Caco-2 (cell line): ENCODE measurements at regions of chr4 and their contacts with region 1.

Region 1: DNA sequence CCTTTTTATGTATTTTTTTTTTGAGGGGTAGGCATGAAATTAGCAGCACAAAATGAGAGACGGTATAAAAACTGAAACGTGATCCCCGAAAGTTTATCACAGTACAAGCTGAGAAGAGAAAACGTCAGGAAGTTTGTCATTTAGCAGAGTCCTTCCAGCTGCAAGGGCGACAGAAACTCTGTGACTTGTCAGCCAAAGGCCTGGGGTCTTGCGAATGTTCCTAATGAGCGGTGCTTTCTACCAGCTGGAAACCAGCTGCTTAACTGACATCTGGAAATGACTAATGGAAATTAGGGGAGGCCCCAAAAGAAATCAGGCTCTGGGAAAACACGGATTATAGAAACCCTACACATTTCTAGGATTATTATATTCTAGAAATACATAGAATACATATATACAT is 66.5 kb downstream of the CHRNA9 start:
- DNase-seq: no peak
- H3K4me3 ChIP-seq: no peak overlapping the region
- H3K4me3 Mint-ChIP-seq: no peak overlapping the region
- H3K27ac Mint-ChIP-seq: no peak overlapping the region
- H3K4me1 ChIP-seq: peaks cover 37% of the 10 kb centered on the region
- H3K4me1 Mint-ChIP-seq: peaks cover 25% of the 10 kb centered on the region
- H3K27me3 ChIP-seq: no peaks in the 10 kb centered on the region
- H3K27me3 Mint-ChIP-seq: no peaks in the 10 kb centered on the region
- CTCF ChIP-seq: no peak

Region 2: DNA sequence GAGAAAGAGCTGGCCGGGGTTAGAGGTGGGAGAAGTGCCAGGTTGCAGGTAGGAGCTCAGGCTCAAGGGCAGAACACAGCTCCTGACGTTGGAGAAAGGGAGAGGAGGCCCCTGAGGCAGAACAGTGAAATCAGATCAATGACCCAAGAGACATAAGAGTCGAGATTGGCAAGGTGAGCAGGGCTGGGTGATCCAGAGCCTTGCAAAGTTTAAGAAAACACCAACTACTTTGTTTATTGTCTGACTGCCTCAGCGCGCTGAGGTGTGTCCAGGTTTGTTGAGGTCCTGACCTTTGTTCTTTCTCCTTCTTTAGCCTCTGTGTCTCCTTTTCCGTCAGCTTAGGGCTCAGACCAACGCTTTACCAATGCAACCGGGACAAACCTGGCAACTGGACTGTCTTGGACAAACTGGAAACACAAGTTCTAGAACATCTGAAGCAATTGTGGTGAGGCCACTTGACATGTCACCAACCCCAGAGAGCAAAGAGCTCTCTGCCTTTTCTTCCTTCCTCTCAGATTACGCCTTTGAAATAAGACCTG is 38.2 kb before region 1 on chr4:
- CTCF ChIA-PET with region 1: no interaction called
- POLR2A ChIA-PET with region 1: interaction called, 4 read pairs
- intact Hi-C with region 1: loop called (anchors 1 kb)
- DNase-seq: peak; percentile 85 to 89
- H3K4me3 ChIP-seq: no peak overlapping the region
- H3K4me3 Mint-ChIP-seq: peak overlapping the region; percentile 52
- H3K27ac Mint-ChIP-seq: peak overlapping the region; percentile 89
- H3K4me1 ChIP-seq: peaks cover 35% of the 10 kb centered on the region
- H3K4me1 Mint-ChIP-seq: peaks cover 47% of the 10 kb centered on the region
- H3K27me3 ChIP-seq: no peaks in the 10 kb centered on the region
- H3K27me3 Mint-ChIP-seq: no peaks in the 10 kb centered on the region
- CTCF ChIP-seq: no peak

Region 3: DNA sequence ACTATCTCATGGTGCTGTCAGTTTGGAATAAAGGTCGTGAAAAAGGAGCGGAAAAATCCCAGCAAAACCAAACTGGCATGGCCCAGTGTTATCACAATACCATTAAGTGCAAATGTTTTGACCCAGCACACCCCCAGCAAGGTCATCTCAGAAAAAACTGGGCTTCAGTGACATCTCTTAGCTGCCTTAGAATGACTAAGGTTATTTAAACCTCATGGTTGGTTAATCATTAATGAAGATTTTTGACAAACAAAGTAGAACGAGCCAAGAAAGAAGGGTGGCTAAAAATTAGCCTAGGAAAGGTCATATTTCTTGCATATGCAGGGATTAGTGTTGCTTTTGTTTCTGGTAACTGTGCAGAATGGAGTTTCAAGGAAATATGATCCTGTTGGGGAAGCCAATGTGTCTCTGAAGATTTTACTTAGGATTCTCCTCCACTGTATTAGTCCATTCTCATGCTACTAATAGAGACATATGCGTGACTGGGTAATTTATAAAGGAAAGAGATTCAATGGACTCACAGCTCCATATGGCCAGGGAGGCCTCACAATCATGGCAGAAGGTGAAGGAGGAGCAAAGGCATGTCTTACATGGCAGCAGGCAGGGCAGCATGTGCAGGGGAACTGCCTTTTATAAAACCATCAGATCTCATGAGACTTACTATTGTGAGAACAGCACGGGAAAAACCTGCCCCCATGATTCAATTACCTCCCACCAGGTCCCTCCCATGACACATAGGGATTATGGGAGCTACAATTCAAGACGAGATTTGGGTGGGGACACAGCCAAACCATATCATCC is 17.0 kb after region 1 on chr4:
- CTCF ChIA-PET with region 1: no interaction called
- POLR2A ChIA-PET with region 1: interaction called, 3 read pairs
- intact Hi-C with region 1: loop called (anchors 1 kb)
- DNase-seq: peak; percentile 51 to 65
- H3K4me3 ChIP-seq: no peak overlapping the region
- H3K4me3 Mint-ChIP-seq: peak overlapping the region; percentile 40
- H3K27ac Mint-ChIP-seq: peak overlapping the region; percentile 90
- H3K4me1 ChIP-seq: peaks cover 36% of the 10 kb centered on the region
- H3K4me1 Mint-ChIP-seq: peaks cover 34% of the 10 kb centered on the region
- H3K27me3 ChIP-seq: no peaks in the 10 kb centered on the region
- H3K27me3 Mint-ChIP-seq: no peaks in the 10 kb centered on the region
- CTCF ChIP-seq: no peak

Region 4: DNA sequence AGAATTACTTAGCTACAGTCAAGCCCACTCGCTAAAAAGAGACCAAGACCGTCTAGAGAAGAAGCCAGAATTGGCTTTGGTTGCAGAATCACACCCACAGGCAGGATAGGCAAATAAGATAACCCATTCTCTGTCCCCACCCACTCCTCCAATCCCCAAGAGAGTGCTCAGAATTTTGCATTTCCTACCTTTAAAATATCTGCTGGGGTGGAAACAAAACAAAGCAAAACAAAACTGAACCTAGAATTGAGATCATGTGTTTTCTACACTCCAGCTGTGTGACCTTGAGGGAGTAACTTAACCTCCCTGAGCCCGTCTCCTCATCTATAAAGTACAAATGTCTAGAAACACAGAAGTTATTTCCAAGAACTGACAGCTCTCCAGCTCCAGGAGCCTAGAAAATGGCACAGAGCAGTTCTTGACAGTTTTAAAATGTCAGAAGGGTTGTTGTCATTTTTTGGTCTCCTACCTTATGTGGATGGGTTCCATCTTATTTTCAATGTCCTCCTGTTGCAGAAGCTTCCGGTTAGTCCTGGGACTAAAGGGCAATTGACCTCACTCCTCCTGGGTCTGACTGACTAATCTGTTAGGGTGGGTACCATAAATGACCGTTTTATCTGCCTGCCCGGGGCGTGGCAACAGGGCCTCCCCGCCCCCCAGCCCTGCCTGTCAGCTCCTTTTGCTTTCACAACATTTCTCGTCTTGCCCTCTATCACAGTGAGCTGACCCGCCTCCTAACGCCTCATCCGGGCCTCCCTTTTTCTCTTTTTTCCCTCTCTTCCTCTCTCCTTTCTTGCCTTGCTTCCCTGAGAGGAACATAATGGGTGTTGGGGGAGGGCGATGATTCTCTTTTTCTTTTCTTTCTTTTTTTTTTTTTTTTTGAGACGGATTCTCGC is 114.0 kb after region 1 on chr4:
- CTCF ChIA-PET with region 1: no interaction called
- POLR2A ChIA-PET with region 1: interaction called, 6 read pairs
- intact Hi-C with region 1: loop called (anchors 2 kb)
- DNase-seq: peak; percentile 79 to 91
- H3K4me3 ChIP-seq: peak overlapping the region; percentile 62
- H3K4me3 Mint-ChIP-seq: peak overlapping the region; percentile 85
- H3K27ac Mint-ChIP-seq: peak overlapping the region; percentile 83
- H3K4me1 ChIP-seq: peaks cover 30% of the 10 kb centered on the region
- H3K4me1 Mint-ChIP-seq: peaks cover 27% of the 10 kb centered on the region
- H3K27me3 ChIP-seq: no peaks in the 10 kb centered on the region
- H3K27me3 Mint-ChIP-seq: no peaks in the 10 kb centered on the region
- CTCF ChIP-seq: no peak

Region 5: DNA sequence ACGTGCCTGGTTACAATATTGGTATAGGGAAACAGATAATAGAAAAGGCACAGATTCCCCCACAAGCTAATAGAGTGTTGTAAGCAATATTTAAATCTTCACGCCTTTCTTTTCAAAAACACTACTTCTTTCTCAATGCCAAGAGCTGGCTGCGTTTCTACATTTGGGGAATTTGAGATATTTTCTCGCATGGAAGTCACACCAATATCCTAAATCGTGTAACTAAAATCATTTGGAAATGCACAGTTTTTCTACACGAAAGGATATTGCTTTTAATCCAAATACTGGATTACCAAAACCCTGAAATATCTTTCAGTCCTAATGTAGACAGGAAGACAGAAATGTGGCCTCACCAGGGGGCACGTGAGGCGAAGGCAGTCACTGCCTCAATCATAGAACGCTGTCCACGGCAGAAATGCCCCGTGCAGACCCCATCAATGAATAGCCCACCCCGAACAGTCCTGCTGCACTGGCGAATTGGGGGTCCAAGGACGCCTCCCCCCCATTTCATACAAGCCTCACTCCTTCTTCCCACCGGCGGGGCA is 454.7 kb after region 1 on chr4:
- CTCF ChIA-PET with region 1: interaction called, 11 read pairs
- POLR2A ChIA-PET with region 1: no interaction called
- intact Hi-C with region 1: no loop called
- DNase-seq: no peak
- H3K4me3 ChIP-seq: no peak overlapping the region
- H3K4me3 Mint-ChIP-seq: no peak overlapping the region
- H3K27ac Mint-ChIP-seq: no peak overlapping the region
- H3K4me1 ChIP-seq: no peaks in the 10 kb centered on the region
- H3K4me1 Mint-ChIP-seq: no peaks in the 10 kb centered on the region
- H3K27me3 ChIP-seq: no peaks in the 10 kb centered on the region
- H3K27me3 Mint-ChIP-seq: no peaks in the 10 kb centered on the region
- CTCF ChIP-seq: no peak